KBM-7 (cell line): ENCODE measurements at regions of chr17 and their contacts with region 1.

Region 1: DNA sequence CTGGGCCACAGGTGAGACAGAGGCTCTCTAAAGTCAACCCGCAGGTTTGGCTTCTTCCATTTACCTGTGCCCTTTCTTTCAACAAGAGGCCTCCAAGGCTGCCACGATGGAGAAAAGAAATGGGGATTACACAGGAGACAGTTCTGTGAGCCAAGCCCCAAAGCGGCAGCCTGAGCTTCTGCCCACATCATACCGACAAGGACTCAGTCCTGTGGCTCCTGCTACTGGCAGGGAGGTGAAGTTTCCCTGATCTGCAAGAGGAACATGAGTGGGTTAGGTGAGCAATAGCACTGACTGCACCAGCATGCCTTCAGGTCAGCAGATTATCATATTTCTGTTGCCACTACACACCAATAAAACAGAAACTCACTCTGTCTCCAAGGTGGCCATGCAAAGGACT is 800.0 kb downstream of the KCNJ18 start:
- DNase-seq: no peak

Region 2: DNA sequence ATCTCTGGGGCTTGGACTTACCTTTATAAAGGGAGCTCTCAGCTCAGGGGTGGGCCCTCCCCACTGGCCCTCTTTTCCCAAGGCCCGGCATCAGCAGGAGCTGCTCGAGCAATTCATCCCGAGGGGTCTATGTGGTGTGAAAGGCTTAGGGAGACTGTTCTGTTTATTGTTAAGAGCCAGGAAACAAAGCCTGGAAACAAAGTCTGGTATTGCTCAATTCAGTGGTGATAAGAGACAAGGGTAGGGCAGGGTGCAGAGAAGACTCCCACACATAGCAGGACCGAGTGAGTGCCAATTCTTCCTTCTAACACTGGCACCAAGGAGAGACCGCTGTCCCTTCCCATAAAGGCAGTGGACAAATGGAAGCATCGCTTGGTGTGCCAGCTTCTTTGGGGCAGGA is 49.3 kb before region 1 on chr17:
- in situ Hi-C with region 1: loop called (anchors 10 kb)
- DNase-seq: no peak

Region 3: GRCh38 chr17:22533744-22534143 is 41.4 kb after region 1 on chr17:
- in situ Hi-C with region 1: no loop called
- DNase-seq: no peak

Region 4: GRCh38 chr17:22569459-22570143 is 77.3 kb after region 1 on chr17:
- in situ Hi-C with region 1: no loop called
- DNase-seq: no peak